Uterus (tissue), 4 donors: ENCODE measurements at regions of chr12 and their contacts with region 1.

Region 1: DNA sequence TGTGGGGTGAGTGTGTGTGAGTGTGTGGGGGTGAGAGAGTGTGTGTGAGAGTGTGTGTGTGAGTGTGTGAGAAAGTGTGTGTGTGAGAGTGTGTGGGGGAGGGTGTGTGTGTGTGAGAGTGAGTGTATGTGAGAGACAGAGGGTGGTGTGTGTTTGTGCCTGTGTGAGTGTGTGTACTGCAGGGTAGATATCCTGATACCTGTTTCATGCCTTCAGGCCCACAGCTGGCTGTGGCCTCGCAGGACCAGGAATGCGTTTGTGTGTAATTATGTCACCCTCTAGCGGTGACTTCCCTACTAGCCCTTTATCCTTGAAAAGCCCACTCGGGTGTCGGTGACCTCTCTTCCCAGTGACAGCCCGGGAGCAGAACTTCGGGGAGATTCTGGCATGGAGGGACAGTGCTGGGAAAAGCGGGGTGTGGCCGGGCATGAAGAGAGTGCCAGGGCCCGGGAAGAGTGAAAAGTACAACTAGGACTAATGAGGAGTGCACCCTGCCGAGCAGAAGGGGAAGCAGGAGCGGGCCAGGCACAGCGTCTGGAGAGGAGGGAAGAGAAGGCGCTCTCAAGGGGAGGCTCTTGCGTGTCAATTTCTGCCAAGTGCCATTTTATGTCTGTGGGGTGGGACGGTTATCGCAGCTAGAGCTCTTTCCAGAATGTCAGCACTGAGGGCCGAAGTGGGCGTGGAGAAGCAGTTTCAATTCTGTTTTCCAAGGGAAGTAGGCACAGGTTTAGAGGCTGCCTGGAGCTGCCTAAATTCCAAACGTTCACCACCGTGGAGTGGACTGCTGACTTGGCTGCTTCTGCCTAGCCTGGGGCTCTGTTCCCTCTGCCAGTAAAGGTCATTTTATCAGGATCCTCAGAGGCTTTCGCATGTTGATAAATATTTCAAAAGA is 11.0 kb upstream of the FBXL14 start:
- DNase-seq: peak; percentile 55 to 75
- H3K4me3 ChIP-seq: peak overlapping the region; percentile 17 to 36
- H3K27ac ChIP-seq: peak overlapping the region; percentile 82 to 91
- H3K4me1 ChIP-seq: peaks cover 0 to 10% of the 10 kb centered on the region in 2 donors
- H3K27me3 ChIP-seq: no peaks in the 10 kb centered on the region
- CTCF ChIP-seq: peak; percentile 77 to 82 (median 80)
- POLR2A ChIP-seq: peak in 1 of 2 donors; percentile 6

Region 2: DNA sequence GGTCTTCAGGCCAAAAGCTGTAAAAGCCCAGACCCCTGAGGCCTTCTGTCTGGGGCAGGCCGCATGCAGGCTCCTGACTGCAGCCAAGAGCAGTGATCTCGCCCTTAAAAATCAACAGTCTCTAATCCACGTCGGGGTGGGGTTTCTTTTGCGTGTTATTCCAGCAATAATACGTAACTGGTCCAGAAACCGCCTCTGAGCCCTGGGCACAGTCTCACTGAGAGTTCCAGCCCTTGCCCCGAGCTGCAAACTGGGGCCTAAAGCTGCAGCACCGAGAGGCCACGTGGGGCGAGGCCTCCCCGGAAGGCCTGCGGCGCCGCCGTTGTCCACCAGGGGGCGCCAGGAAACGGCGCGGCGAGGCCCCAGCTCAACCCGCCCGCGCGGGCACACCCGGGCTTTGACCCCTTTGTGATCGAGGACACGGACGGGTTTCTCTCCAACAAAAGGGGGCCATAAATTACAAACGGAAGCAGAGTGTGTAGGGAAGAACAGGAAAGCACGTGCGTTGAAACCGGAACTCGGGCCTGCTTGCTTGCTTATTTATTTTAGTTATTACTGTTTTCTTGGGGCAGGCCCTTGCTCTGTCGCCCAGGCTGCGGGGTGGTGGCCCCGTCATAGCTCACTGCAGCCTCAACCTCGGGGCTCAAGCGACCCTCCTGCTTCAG is 1029.3 kb before region 1 on chr12:
- intact Hi-C with region 1: loop called (anchors 10 kb)
- DNase-seq: peak; percentile 67 to 83
- H3K4me3 ChIP-seq: no peak overlapping the region
- H3K27ac ChIP-seq: peak overlapping the region; percentile 43 to 66
- H3K4me1 ChIP-seq: no peaks in the 10 kb centered on the region
- H3K27me3 ChIP-seq: no peaks in the 10 kb centered on the region
- CTCF ChIP-seq: peak; percentile 97 to 100 (median 98)
- POLR2A ChIP-seq: no peak

Region 3: DNA sequence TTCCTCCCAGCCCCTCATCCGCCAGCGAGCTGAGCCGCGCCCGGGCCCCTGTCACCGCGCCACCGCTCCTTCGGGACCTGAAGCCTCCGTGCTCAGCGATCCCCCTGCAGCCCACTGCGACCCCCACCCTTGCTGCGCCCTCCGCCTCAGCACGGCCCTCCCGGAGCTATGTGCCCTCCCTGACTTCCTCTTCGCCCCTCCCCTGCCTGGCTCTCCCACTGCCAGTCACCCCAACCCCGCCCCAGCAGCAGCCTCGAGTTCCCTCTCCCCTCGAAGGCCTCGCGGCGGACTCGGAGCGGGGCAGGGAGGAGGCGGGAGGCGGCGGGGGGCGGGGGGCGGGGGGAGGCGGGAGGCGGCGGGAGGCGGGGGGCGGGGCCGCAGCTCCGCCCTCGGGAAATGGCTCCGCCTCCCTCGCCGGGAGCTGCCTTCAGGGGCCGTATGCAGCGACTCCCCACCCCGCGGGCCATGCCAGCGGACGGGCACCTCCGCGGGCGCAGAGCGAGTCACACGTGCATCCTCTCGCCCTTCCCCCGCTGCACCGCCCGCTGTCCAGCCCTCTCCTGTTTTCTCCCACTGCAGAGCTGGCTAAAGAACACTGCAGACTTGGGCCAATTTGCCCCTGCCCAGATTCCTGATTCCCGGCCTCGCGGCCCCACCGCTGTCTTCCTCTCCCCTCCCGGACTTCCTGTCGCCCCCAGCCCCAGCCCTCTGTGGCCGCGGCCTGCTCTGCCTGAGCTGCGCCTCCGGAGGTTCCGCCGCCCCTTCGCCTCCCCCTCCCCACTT is 56.4 kb after region 1 on chr12:
- intact Hi-C with region 1: no loop called
- DNase-seq: peak; percentile 77 to 82
- H3K4me3 ChIP-seq: peak overlapping the region; percentile 53 to 67
- H3K27ac ChIP-seq: peak overlapping the region; percentile 81 to 94
- H3K4me1 ChIP-seq: no peaks in the 10 kb centered on the region
- H3K27me3 ChIP-seq: no peaks in the 10 kb centered on the region
- CTCF ChIP-seq: peak in 2 of 4 experiments; percentile 9 to 11
- POLR2A ChIP-seq: peak; percentile 59 to 67

Region 4: GRCh38 chr12:1936406-1937320 is 331.3 kb after region 1 on chr12:
- intact Hi-C with region 1: no loop called
- DNase-seq: peak; percentile 60
- H3K4me3 ChIP-seq: no peak overlapping the region
- H3K27ac ChIP-seq: peak overlapping the region; percentile 37 to 40
- H3K4me1 ChIP-seq: peaks cover 5 to 9% of the 10 kb centered on the region in 2 donors
- H3K27me3 ChIP-seq: no peaks in the 10 kb centered on the region
- CTCF ChIP-seq: no peak
- POLR2A ChIP-seq: no peak